Activated CD8-positive, alpha-beta memory T cell treated with anti-CD3 and anti-CD28 coated beads, Interleukin-2, amount 10 ng/mL, durations not matched to agents 7 days and 5 days (primary cell): ENCODE measurements at regions of chr5 and their contacts with region 1.

Region 1: DNA sequence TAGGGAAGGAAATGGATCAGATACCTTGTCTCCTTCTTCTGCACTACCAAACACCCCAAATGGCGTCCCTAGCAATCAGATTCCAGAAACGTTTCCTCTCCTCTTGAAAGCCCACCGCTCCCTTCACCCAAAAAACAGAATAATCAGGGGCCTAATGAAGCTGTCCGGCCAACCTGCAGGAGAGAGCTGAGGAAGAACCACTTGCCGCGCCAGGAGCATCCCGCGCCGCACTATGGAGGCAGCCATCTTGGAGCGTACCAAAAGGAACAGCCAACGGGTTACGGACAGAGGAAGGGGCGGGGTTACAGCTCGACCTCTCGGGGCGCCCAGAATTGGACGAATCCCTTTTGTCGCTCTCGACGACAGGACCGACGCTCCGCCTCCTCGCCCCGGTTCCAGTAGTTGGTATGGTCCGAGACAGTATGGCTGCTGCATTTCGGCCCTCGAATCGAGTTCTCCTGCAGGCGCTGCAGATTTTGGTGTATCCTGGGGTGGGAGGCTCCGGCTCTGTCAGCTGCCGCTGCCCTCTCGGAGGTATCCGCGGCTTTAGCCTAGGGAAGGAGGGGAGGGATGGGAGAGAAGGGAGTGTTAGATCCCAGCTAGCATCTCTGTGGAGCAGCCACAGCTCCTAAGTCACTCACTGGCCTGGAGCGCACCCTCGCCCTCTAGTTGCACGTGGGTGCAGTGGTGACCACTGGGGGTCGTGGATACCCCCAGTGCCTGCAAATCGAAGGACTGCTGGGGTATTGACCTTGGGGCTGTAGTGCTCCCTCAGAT is at the starts of genes MRPS27 and PTCD2:
- DNase-seq: peak; percentile 97
- ATAC-seq: peak; percentile 99
- H3K4me3 Mint-ChIP-seq: peak within 1 kb of the TSS; percentile 96
- H3K27ac Mint-ChIP-seq: peak within 1 kb of the TSS; percentile 89
- H3K4me1 Mint-ChIP-seq: peaks cover 41% of the 10 kb centered on the region
- H3K27me3 Mint-ChIP-seq: no peaks in the 10 kb centered on the region
- total RNA-seq, gene MRPS27: 45.5 to 52.6 TPM
- total RNA-seq, gene PTCD2: 10.2 to 10.6 TPM

Region 2: GRCh38 chr5:72307968-72308852 is 12.0 kb before region 1 on chr5:
- CTCF ChIA-PET with region 1: interaction called, 58 read pairs
- DNase-seq: peak; percentile 97
- ATAC-seq: peak; percentile 98
- H3K4me3 Mint-ChIP-seq: peak overlapping the region; percentile 86
- H3K27ac Mint-ChIP-seq: peak overlapping the region; percentile 91
- H3K4me1 Mint-ChIP-seq: peaks cover 33% of the 10 kb centered on the region
- H3K27me3 Mint-ChIP-seq: no peaks in the 10 kb centered on the region